GM12878 (cell line): ENCODE measurements at regions of chr5 and their contacts with region 1.

Region 1: GRCh38 chr5:78594610-78595457 is 53.7 kb downstream of the LHFPL2 start:
- DNase-seq: no peak
- ATAC-seq: peak; percentile 44
- H3K4me3 ChIP-seq: no peak overlapping the region
- H3K27ac ChIP-seq: no peak overlapping the region; the same call in 1 of the 2 replicates
- H3K4me1 ChIP-seq: peaks cover 26% of the 10 kb centered on the region
- H3K27me3 ChIP-seq: no peaks in the 10 kb centered on the region
- CTCF ChIP-seq: no peak
- EP300 ChIP-seq: no peak
- POLR2A ChIP-seq: no peak
- RAD21 ChIP-seq: no peak

Region 2: GRCh38 chr5:78308703-78309102 is 286.1 kb before region 1 on chr5:
- CTCF ChIA-PET with region 1: no interaction called
- POLR2A ChIA-PET with region 1: no interaction called
- RAD21 ChIA-PET with region 1: no interaction called
- SMC1A ChIA-PET with region 1: no interaction called
- in situ Hi-C with region 1: no loop called
- intact Hi-C with region 1: no loop called
- DNase-seq: no peak
- ATAC-seq: no peak
- H3K4me3 ChIP-seq: no peak overlapping the region
- H3K27ac ChIP-seq: no peak overlapping the region
- H3K4me1 ChIP-seq: no peaks in the 10 kb centered on the region
- H3K27me3 ChIP-seq: no peaks in the 10 kb centered on the region
- CTCF ChIP-seq: no peak
- EP300 ChIP-seq: no peak
- POLR2A ChIP-seq: no peak
- RAD21 ChIP-seq: no peak

Region 3: GRCh38 chr5:78574731-78575161 is 20.1 kb before region 1 on chr5:
- CTCF ChIA-PET with region 1: interaction called, 26 read pairs
- POLR2A ChIA-PET with region 1: interaction called, 9 read pairs
- RAD21 ChIA-PET with region 1: interaction called, 51 read pairs
- SMC1A ChIA-PET with region 1: interaction called, 121 read pairs
- in situ Hi-C with region 1: no loop called
- intact Hi-C with region 1: no loop called
- DNase-seq: peak; percentile 64
- ATAC-seq: peak; percentile 95
- H3K4me3 ChIP-seq: peak overlapping the region; percentile 1; the same call in 1 of the 2 replicates
- H3K27ac ChIP-seq: peak overlapping the region; percentile 93
- H3K4me1 ChIP-seq: peaks cover 25% of the 10 kb centered on the region
- H3K27me3 ChIP-seq: no peaks in the 10 kb centered on the region
- CTCF ChIP-seq: no peak
- EP300 ChIP-seq: no peak; a peak in 1 of 4 replicates
- POLR2A ChIP-seq: 0 out of 2 replicates have a peak, but pooled peaks have one; percentile 30
- RAD21 ChIP-seq: no peak

Region 4: GRCh38 chr5:78611126-78611605 is 16.3 kb after region 1 on chr5:
- CTCF ChIA-PET with region 1: interaction called, 15 read pairs
- POLR2A ChIA-PET with region 1: interaction called, 3 read pairs
- RAD21 ChIA-PET with region 1: interaction called, 3 read pairs
- SMC1A ChIA-PET with region 1: interaction called, 6 read pairs
- in situ Hi-C with region 1: no loop called
- intact Hi-C with region 1: no loop called
- DNase-seq: no peak
- ATAC-seq: no peak
- H3K4me3 ChIP-seq: no peak overlapping the region
- H3K27ac ChIP-seq: no peak overlapping the region
- H3K4me1 ChIP-seq: no peaks in the 10 kb centered on the region
- H3K27me3 ChIP-seq: no peaks in the 10 kb centered on the region
- CTCF ChIP-seq: no peak
- EP300 ChIP-seq: no peak
- POLR2A ChIP-seq: no peak
- RAD21 ChIP-seq: no peak

Region 5: DNA sequence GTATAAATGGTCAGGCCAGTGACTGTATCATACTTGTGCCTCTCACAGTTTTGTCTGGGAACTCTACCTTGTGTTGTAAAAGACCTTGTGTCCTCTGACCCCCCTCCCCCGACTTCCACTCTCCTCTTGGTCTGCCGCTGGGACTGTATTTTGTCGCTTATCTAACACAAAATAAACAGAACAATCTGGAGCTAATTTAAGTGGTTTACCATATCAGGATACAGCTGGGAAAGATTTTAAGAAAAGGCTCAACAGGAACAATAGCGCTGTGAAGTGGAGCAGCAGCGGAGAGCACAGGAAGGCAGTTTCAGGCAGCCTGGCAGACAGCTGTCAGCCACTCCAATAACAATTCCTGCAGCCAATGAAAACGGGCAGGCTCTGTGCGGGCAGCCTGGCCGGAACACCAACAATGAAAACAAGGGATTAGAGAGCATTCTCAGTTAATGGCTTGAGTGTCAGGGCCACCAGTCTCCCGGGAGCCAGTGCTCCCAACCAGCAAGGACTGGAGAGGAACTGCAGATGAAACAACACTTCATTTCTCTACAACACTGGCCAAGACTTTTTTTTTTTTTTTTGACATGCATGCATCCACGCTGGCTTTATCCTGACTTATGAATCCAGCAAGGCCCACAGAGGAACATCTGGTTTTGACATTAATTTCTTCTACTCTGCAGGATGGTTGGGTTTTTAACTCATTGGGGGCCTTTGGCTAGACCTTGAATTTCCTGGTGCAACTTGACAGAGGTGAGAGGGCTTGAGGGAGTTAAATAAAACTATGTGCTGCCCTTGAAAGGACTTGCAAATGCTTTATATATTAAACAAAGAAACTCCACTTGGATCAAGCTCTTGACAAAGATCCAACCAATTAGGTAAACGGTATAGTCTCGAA is 313.6 kb after region 1 on chr5:
- CTCF ChIA-PET with region 1: no interaction called
- POLR2A ChIA-PET with region 1: no interaction called
- RAD21 ChIA-PET with region 1: no interaction called
- SMC1A ChIA-PET with region 1: no interaction called
- in situ Hi-C with region 1: no loop called
- intact Hi-C with region 1: no loop called
- DNase-seq: no peak
- ATAC-seq: no peak
- H3K4me3 ChIP-seq: no peak overlapping the region
- H3K27ac ChIP-seq: peak overlapping the region; percentile 47
- H3K4me1 ChIP-seq: peaks cover 43% of the 10 kb centered on the region
- H3K27me3 ChIP-seq: no peaks in the 10 kb centered on the region
- CTCF ChIP-seq: no peak
- EP300 ChIP-seq: no peak
- POLR2A ChIP-seq: no peak
- RAD21 ChIP-seq: no peak